Activated CD4-positive, alpha-beta memory T cell treated with anti-CD3 and anti-CD28 coated beads, Interleukin-2, amount 10 ng/mL, durations not matched to agents 7 days and 5 days (primary cell): ENCODE measurements at regions of chr13 and their contacts with region 1.

Region 1: DNA sequence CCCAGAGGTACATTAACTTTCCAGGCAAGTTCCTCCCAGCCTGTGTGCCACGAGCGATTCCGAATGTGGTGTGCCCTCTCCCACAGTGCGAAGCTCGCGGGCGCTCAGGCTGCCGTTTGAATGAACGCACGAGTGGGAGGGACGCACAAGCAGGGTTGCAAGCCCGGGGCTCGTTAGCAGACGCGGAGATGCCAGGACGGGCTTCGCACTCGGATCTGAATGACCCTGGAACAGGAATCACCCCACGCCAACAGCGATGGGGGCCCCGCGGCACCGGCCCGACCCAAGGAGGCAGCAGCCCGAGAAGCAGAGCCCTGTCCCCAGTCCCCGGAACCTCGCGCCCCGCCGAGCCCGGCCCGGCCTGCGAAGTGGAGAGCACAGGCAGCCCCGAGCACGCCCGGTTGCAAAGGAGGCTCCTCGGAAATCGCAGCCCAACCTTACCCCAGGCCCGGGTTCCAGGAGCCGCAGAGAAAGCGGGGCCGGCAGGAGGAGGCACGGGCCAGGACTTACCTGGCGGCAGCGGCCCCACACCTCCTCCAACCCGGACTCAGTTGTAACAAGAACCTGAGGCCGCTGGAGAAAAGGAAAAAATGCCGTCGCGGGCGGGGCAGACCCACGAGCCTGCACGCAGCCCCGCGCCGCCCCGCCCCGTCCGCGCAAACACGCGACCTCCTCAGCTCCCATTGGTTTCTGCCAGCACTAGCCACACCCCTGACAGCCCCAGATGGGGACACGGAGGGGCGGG is at the start of gene SLC25A30:
- DNase-seq: peak; percentile 91
- H3K4me3 Mint-ChIP-seq: peak within 1 kb of the TSS; percentile 85
- H3K27ac Mint-ChIP-seq: peak within 1 kb of the TSS; percentile 96
- H3K4me1 Mint-ChIP-seq: peaks cover 18% of the 10 kb centered on the region
- H3K27me3 Mint-ChIP-seq: peaks cover 2% of the 10 kb centered on the region
- total RNA-seq, gene SLC25A30: 17.5 to 17.6 TPM

Region 2: GRCh38 chr13:45310341-45311125 is 107.4 kb before region 1 on chr13:
- CTCF ChIA-PET with region 1: no interaction called
- POLR2A ChIA-PET with region 1: no interaction called
- DNase-seq: no peak
- H3K4me3 Mint-ChIP-seq: peak overlapping the region; percentile 69
- H3K27ac Mint-ChIP-seq: peak overlapping the region; percentile 3
- H3K4me1 Mint-ChIP-seq: peaks cover 18% of the 10 kb centered on the region
- H3K27me3 Mint-ChIP-seq: peaks cover 23% of the 10 kb centered on the region

Region 3: DNA sequence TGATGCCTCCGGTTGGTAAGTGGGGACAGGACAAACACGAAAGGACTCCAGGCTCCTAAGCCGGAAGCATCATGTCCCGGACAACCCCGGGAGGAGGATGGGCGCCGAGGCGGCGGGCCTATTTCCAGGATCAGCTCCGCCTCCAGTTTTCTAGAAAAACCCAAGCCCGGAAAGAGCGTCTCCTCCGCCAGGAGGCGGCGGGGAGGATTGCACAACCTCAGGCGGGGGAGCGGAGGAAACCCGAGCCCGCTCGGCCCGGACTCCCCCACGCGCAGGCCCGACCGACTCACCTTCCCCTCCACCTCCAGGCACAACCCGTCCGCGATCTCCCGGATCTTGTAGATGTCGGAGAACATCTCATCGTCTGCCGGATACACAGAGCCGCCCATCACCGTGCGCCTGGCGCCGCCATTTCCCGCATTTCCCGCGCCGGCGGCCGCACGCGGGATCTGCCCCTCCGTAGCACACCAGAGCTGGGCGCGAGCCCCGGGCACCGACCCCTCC is 77.5 kb before region 1 on chr13:
- CTCF ChIA-PET with region 1: interaction called, 15 read pairs
- POLR2A ChIA-PET with region 1: interaction called, 35 read pairs
- DNase-seq: peak; percentile 87
- H3K4me3 Mint-ChIP-seq: peak overlapping the region; percentile 90
- H3K27ac Mint-ChIP-seq: peak overlapping the region; percentile 99
- H3K4me1 Mint-ChIP-seq: peaks cover 57% of the 10 kb centered on the region
- H3K27me3 Mint-ChIP-seq: no peaks in the 10 kb centered on the region

Region 4: DNA sequence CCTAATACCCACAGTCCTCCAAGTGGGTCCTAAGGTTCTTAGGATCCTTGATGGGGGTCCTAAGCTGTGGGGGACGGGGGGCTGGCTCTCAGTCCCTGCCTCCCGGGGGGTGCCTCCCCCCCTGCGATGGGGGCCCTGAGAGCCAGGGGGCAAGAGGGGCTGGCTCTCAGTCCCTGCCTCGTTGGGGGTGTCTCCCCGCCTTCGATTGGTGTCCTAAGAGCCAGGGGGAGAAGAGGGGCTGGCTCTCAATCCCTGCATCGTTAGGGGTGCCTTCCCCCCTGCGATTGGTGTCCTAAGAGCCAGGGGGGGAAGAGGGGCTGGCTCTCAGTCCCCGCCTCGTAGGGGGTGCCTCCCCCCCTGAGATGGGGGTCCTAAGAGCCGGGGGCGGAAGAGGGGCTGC is 36.8 kb before region 1 on chr13:
- CTCF ChIA-PET with region 1: no interaction called
- POLR2A ChIA-PET with region 1: no interaction called
- DNase-seq: no peak
- H3K4me3 Mint-ChIP-seq: no peak overlapping the region
- H3K27ac Mint-ChIP-seq: no peak overlapping the region
- H3K4me1 Mint-ChIP-seq: no peaks in the 10 kb centered on the region
- H3K27me3 Mint-ChIP-seq: no peaks in the 10 kb centered on the region

Region 5: DNA sequence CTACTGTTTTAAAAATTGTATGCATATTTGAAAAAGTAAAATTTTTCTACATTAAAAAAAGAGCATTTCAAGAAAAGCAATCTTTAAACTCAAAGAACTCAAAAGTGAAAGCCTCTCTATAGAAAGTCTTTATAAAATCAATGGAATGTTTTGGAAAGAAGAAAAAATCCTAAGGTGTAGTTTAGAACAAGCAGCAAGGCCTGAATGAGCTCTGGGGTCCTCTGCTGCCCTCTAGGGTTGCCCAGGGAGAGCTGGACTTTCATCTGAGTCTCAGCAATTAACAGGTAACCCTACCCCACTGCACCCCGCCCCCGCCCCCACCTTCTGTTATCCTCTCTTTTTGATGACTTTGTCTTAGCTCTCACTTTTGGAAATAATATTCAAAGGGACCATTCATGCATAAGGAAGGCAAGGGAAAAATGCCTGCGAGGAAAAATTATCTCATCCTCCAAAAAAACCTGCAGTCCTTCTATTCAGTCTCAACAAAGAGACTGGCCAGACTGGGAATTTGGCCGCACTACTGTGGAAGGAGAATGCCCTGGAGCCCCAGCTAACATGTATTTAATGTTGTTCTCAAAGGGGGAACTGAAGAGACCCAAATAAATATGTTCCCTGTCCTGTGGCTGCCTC is 23.9 kb before region 1 on chr13:
- CTCF ChIA-PET with region 1: interaction called, 8 read pairs
- POLR2A ChIA-PET with region 1: interaction called, 70 read pairs
- DNase-seq: peak; percentile 26
- H3K4me3 Mint-ChIP-seq: no peak overlapping the region
- H3K27ac Mint-ChIP-seq: no peak overlapping the region
- H3K4me1 Mint-ChIP-seq: peaks cover 48% of the 10 kb centered on the region
- H3K27me3 Mint-ChIP-seq: no peaks in the 10 kb centered on the region

Region 6: DNA sequence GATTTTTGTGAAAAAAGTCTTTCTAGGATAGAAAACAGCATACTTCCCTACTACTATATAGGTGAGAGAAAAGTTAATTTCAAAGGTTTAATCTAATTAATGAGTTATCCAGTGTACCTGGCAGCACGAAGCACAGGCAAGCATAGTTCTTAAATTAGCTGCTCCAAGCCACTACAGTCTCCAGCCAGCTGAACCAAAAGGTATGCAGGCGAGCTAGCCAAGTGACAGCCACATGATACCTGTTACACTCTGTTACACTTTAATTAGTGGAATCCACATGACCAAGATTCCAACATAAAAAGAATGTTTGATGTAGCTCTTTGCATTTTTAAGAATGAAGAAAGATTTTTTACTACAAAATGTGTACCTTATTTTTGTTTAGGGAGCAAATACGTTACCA is 15.3 kb before region 1 on chr13:
- CTCF ChIA-PET with region 1: interaction called, 11 read pairs
- POLR2A ChIA-PET with region 1: interaction called, 70 read pairs
- DNase-seq: no peak
- H3K4me3 Mint-ChIP-seq: no peak overlapping the region
- H3K27ac Mint-ChIP-seq: no peak overlapping the region
- H3K4me1 Mint-ChIP-seq: peaks cover 43% of the 10 kb centered on the region
- H3K27me3 Mint-ChIP-seq: no peaks in the 10 kb centered on the region

Region 7: GRCh38 chr13:45464687-45465453 is 46.9 kb after region 1 on chr13 and contains the start of gene COG3:
- CTCF ChIA-PET with region 1: interaction called, 17 read pairs
- POLR2A ChIA-PET with region 1: interaction called, 25 read pairs
- DNase-seq: peak; percentile 96
- H3K4me3 Mint-ChIP-seq: peak within 1 kb of the TSS; percentile 86
- H3K27ac Mint-ChIP-seq: peak within 1 kb of the TSS; percentile 86
- H3K4me1 Mint-ChIP-seq: peaks cover 44% of the 10 kb centered on the region
- H3K27me3 Mint-ChIP-seq: no peaks in the 10 kb centered on the region
- total RNA-seq, gene COG3: 24.6 to 26.5 TPM